T-cell (primary cell): ENCODE measurements at regions of chr17 and their contacts with region 1.

Region 1: DNA sequence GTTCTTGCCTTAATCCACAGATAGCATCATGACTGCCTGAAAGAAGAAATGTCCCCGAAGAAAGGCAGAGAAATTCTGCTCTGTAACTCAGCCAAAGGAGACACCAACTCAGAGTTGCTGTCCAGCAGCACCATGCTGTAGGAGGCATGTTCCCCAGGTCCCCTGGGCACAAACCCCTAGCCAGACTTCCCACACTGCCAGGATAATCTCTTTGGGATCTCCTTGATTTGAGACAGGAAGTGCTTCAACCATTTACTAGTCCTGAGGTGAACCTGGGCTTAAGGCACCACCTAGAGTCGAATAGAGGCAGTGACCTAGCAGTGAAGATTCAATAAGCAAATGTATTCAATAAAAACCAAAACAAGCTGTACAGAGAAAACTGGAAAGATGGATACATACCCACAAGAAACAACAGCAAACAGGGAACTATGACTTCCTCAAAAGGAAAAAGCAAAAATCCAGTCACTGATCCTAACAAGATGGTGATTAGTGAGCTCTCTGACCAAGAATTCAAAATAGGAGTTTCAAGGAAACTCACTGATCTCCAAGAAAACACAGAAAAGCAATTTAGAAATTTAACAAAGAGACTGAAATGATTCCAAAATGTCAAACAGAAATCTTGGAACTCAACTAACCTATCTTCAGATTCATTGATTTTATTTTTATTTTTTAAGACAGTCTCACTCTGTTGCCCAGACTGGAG is 5.7 kb downstream of the OR4D2 start:
- DNase-seq: peak in 33 of 35 experiments; percentile 12 to 80 (median 34)
- ATAC-seq: peak; percentile 76 to 92 (median 82)
- H3K4me3 ChIP-seq: no peak overlapping the region
- H3K4me3 Mint-ChIP-seq: peak overlapping the region in 1 of 3 donors; percentile 44
- H3K27ac ChIP-seq: peak overlapping the region; percentile 40
- H3K27ac Mint-ChIP-seq: peak overlapping the region; percentile 64 to 90
- H3K4me1 ChIP-seq: peaks cover 23 to 39% of the 10 kb centered on the region in 2 experiments
- H3K4me1 Mint-ChIP-seq: peaks cover 42 to 49% (median 45%) of the 10 kb centered on the region in 3 donors
- H3K27me3 ChIP-seq: peaks cover 3 to 7% of the 10 kb centered on the region in 2 experiments
- H3K27me3 Mint-ChIP-seq: peaks cover 6 to 9% of the 10 kb centered on the region in 2 donors

Region 2: DNA sequence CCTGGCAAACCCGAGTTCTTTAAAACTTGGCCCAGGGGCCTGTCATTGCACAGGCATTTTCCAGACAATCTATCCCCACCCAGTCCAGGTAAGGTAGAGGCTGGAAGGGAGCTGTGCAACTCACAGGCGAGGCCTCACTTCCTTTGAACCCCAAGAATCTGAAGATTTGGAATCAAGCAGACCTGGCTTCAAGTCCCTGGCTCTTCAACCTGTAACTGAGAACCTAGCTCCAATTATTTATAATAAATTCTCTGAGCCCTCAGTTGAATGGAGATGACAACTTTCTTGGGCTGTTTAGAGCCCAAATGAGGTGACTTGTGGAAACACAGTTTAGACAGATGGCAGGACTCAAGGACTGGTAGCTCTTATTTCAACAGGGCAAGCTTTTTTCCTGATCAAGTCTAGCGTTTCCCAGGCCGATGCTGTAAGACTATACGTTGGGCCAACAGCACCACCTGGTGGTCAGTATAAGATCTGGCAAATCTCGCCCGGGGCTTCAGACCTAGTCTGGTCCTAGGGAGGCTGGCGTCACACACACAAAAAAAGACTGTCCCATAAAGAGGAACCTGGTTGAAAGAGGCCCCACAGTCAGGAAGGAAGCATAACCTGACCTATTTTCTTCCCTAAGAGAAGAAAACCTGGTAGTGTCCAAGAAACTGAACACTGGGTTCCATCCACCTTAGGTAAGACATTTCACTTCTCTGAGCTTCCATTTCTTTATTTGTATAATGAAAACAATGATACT is 1456.7 kb before region 1 on chr17:
- CTCF ChIA-PET with region 1: no interaction called
- POLR2A ChIA-PET with region 1: no interaction called
- DNase-seq: peak; percentile 29 to 86 (median 65)
- ATAC-seq: peak; percentile 88 to 93 (median 90)
- H3K4me3 ChIP-seq: no peak overlapping the region
- H3K4me3 Mint-ChIP-seq: no peak overlapping the region
- H3K27ac ChIP-seq: no peak overlapping the region
- H3K27ac Mint-ChIP-seq: no peak overlapping the region
- H3K4me1 ChIP-seq: peaks cover 0 to 5% of the 10 kb centered on the region in 2 experiments
- H3K4me1 Mint-ChIP-seq: peaks cover 2 to 7% (median 5%) of the 10 kb centered on the region in 3 donors
- H3K27me3 ChIP-seq: peaks cover 0 to 8% of the 10 kb centered on the region in 2 experiments
- H3K27me3 Mint-ChIP-seq: peaks cover 0 to 2% of the 10 kb centered on the region in 2 donors

Region 3: GRCh38 chr17:58121925-58122324 is 50.6 kb before region 1 on chr17:
- CTCF ChIA-PET with region 1: interaction called, 7 to 38 read pairs
- POLR2A ChIA-PET with region 1: no interaction called
- DNase-seq: peak in 32 of 35 experiments; percentile 9 to 78 (median 34)
- ATAC-seq: peak in 3 of 4 experiments; percentile 69 to 90 (median 81)
- H3K4me3 ChIP-seq: no peak overlapping the region
- H3K4me3 Mint-ChIP-seq: no peak overlapping the region
- H3K27ac ChIP-seq: no peak overlapping the region
- H3K27ac Mint-ChIP-seq: no peak overlapping the region
- H3K4me1 ChIP-seq: no peaks in the 10 kb centered on the region
- H3K4me1 Mint-ChIP-seq: peaks cover 9 to 23% (median 11%) of the 10 kb centered on the region in 3 donors
- H3K27me3 ChIP-seq: no peaks in the 10 kb centered on the region
- H3K27me3 Mint-ChIP-seq: peaks cover 5 to 13% of the 10 kb centered on the region in 2 donors

Region 4: GRCh38 chr17:58153046-58153445 is 19.5 kb before region 1 on chr17:
- CTCF ChIA-PET with region 1: interaction called in 1 of 2 experiments, 18 read pairs
- POLR2A ChIA-PET with region 1: no interaction called
- DNase-seq: peak; percentile 46 to 85 (median 67)
- ATAC-seq: peak; percentile 81 to 89 (median 86)
- H3K4me3 ChIP-seq: no peak overlapping the region
- H3K4me3 Mint-ChIP-seq: peak overlapping the region; percentile 32 to 86 (median 37)
- H3K27ac ChIP-seq: peak overlapping the region; percentile 93
- H3K27ac Mint-ChIP-seq: peak overlapping the region; percentile 96 to 98
- H3K4me1 ChIP-seq: peaks cover 37 to 67% of the 10 kb centered on the region in 2 experiments
- H3K4me1 Mint-ChIP-seq: peaks cover 75 to 88% (median 84%) of the 10 kb centered on the region in 3 donors
- H3K27me3 ChIP-seq: no peaks in the 10 kb centered on the region
- H3K27me3 Mint-ChIP-seq: no peaks in the 10 kb centered on the region

Region 5: DNA sequence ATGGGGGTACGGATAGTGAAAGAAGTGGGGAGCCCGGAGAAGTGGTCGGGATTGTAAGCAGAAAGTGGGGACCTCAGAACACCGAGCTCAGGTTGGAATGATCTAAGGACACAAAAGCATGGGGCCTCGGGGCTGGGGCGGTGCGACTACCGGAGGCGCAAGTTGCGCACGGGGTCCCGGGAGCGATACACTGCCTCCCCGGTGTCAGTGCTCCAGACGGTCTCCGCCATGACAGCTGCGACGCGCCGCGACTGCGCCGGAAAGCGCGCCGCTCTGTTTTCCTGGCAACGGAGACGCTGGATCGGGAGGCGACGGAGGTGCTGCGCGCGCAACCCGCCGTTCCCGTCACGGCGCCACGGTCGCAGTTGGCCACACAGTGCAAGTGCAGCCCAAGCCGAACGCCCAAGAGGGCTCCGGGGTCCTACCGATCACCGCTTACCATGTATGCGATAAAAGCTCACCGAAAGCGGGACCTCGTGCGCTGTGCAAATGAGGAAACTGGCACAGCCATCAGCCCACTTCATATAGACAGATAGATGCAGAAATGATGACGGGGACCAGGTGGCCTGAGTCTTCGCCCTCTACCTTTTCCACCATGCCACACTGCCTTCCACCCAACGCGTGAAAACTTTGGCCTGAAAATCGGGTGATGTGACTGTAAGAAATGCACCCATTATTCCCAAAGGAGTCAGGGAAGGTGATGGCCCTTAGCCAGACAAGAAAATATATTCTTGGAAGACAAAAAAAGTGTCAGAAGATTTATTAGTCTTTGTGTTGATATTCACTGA is 46.7 kb after region 1 on chr17 and contains the start of gene MKS1:
- CTCF ChIA-PET with region 1: no interaction called
- POLR2A ChIA-PET with region 1: no interaction called
- DNase-seq: peak; percentile 90 to 97 (median 94)
- ATAC-seq: peak; percentile 97 to 99 (median 99)
- H3K4me3 ChIP-seq: peak within 1 kb of the TSS; percentile 75 to 90
- H3K4me3 Mint-ChIP-seq: peak within 1 kb of the TSS; percentile 86 to 92 (median 91)
- H3K27ac ChIP-seq: peak within 1 kb of the TSS; percentile 79
- H3K27ac Mint-ChIP-seq: peak within 1 kb of the TSS; percentile 91 to 98
- H3K4me1 ChIP-seq: peaks cover 10 to 19% of the 10 kb centered on the region in 2 experiments
- H3K4me1 Mint-ChIP-seq: peaks cover 17 to 24% (median 23%) of the 10 kb centered on the region in 3 donors
- H3K27me3 ChIP-seq: no peaks in the 10 kb centered on the region
- H3K27me3 Mint-ChIP-seq: peaks cover 3 to 5% of the 10 kb centered on the region in 2 donors
- total RNA-seq, gene MKS1: 12.7 to 32.6 (median 22.3) TPM

Region 6: DNA sequence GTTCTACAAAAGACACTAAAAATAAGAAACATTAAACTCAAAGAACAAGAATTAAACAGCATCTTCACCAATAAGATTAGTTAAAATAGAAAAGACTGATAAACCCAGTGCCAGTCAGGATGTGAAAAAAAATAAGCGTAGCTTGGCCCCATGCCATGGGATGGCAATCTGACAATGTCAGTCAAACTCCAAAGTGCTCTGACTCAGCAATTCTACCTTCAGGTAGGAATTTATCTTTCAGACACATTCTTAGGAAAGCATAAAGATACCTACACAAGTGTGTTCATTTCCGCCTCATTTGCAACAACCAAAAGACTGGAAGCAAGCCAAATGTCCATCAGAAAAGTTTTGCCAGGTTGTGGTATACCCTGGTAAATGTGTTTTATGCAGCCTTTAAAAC is 117.3 kb after region 1 on chr17:
- CTCF ChIA-PET with region 1: no interaction called
- POLR2A ChIA-PET with region 1: no interaction called
- DNase-seq: no peak
- ATAC-seq: no peak
- H3K4me3 ChIP-seq: no peak overlapping the region
- H3K4me3 Mint-ChIP-seq: no peak overlapping the region
- H3K27ac ChIP-seq: no peak overlapping the region
- H3K27ac Mint-ChIP-seq: peak overlapping the region in 1 of 2 donors; percentile 13
- H3K4me1 ChIP-seq: no peaks in the 10 kb centered on the region
- H3K4me1 Mint-ChIP-seq: no peaks in the 10 kb centered on the region
- H3K27me3 ChIP-seq: peaks cover 0 to 32% of the 10 kb centered on the region in 2 experiments
- H3K27me3 Mint-ChIP-seq: peaks cover 16 to 32% of the 10 kb centered on the region in 2 donors

Region 7: GRCh38 chr17:58432806-58433572 is 260.5 kb after region 1 on chr17:
- CTCF ChIA-PET with region 1: no interaction called
- POLR2A ChIA-PET with region 1: interaction called in 1 of 2 experiments, 11 read pairs
- DNase-seq: no peak
- ATAC-seq: no peak
- H3K4me3 ChIP-seq: no peak overlapping the region
- H3K4me3 Mint-ChIP-seq: no peak overlapping the region
- H3K27ac ChIP-seq: no peak overlapping the region
- H3K27ac Mint-ChIP-seq: no peak overlapping the region
- H3K4me1 ChIP-seq: no peaks in the 10 kb centered on the region
- H3K4me1 Mint-ChIP-seq: no peaks in the 10 kb centered on the region
- H3K27me3 ChIP-seq: no peaks in the 10 kb centered on the region
- H3K27me3 Mint-ChIP-seq: no peaks in the 10 kb centered on the region